ENCODE measurements at regions of chr1 and their contacts with region 1.

Region 1: GRCh38 chr1:50620680-50621329 is 197.6 kb upstream of the DMRTA2 start:
- DNase-seq: no peak
- H3K4me3 ChIP-seq: no peak overlapping the region
- H3K27ac ChIP-seq: no peak overlapping the region
- H3K27me3 ChIP-seq: no peaks in the 10 kb centered on the region
- CTCF ChIP-seq: peak; percentile 69

Region 2: DNA sequence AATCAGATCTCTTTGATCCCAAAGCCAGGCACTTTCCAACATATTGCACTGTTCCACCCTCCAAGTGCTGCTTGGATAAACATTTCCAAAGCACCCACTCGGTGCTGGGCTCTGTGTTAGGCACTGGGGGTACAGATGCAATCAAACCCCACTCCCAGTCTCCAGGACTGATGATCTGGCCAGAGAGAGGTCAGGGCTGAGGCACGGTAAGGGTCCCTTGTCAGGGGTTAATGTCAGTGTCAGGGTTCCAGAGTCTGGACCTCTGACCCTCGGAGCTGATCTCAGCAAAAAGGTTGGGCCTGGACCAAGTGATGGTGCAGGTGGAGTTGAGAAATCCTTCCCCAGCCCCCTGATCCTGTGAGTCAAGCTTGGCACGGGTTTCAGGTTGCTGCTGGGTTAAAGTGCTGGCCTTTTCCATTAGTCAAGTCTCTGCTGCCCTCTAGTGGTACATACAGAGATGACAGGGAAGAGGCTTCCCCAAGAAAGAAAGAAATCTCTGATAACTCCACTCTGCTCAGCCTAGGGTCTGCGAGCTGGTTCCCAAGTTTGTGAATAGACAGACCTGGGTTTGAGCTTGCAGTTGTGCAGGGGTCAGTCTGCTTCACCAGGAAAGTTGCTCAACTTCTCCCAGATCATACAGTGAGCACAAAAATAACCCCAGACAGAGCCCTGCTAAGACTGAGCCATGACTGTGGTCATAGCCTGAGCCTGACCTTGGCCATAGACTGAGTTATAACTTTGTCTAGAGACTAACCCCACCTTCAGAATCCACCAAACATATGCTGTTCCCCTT is 272.2 kb before region 1 on chr1:
- CTCF ChIA-PET with region 1: no interaction called
- POLR2A ChIA-PET with region 1: no interaction called
- DNase-seq: peak; percentile 46
- H3K4me3 ChIP-seq: no peak overlapping the region
- H3K27ac ChIP-seq: no peak overlapping the region
- H3K27me3 ChIP-seq: peaks cover 2% of the 10 kb centered on the region
- CTCF ChIP-seq: peak; percentile 86

Region 3: GRCh38 chr1:50582346-50582745 is 38.5 kb before region 1 on chr1:
- CTCF ChIA-PET with region 1: no interaction called
- POLR2A ChIA-PET with region 1: no interaction called
- DNase-seq: no peak
- H3K4me3 ChIP-seq: no peak overlapping the region
- H3K27ac ChIP-seq: no peak overlapping the region
- H3K27me3 ChIP-seq: no peaks in the 10 kb centered on the region
- CTCF ChIP-seq: peak; percentile 14; the same call in 1 of the 2 replicates

Region 4: GRCh38 chr1:50633465-50633864 is 12.7 kb after region 1 on chr1:
- CTCF ChIA-PET with region 1: interaction called, 13 read pairs
- POLR2A ChIA-PET with region 1: no interaction called
- DNase-seq: no peak
- H3K4me3 ChIP-seq: no peak overlapping the region
- H3K27ac ChIP-seq: no peak overlapping the region
- H3K27me3 ChIP-seq: no peaks in the 10 kb centered on the region
- CTCF ChIP-seq: no peak

Region 5: GRCh38 chr1:50697440-50698421 is 76.9 kb after region 1 on chr1:
- CTCF ChIA-PET with region 1: interaction called, 95 read pairs
- POLR2A ChIA-PET with region 1: no interaction called
- DNase-seq: peak; percentile 7
- H3K4me3 ChIP-seq: no peak overlapping the region
- H3K27ac ChIP-seq: no peak overlapping the region
- H3K27me3 ChIP-seq: no peaks in the 10 kb centered on the region
- CTCF ChIP-seq: no peak